ENCODE measurements at regions of chr4 and their contacts with region 1.

Region 1: GRCh38 chr4:75724066-75724866 is at the start of gene USO1:
- DNase-seq: peak; percentile 99
- H3K4me3 Mint-ChIP-seq: peak within 1 kb of the TSS; percentile 99
- H3K27ac Mint-ChIP-seq: peak within 1 kb of the TSS; percentile 97
- H3K4me1 Mint-ChIP-seq: peaks cover 47% of the 10 kb centered on the region
- H3K27me3 Mint-ChIP-seq: no peaks in the 10 kb centered on the region
- total RNA-seq, gene USO1: 42.1 to 42.4 TPM

Region 2: DNA sequence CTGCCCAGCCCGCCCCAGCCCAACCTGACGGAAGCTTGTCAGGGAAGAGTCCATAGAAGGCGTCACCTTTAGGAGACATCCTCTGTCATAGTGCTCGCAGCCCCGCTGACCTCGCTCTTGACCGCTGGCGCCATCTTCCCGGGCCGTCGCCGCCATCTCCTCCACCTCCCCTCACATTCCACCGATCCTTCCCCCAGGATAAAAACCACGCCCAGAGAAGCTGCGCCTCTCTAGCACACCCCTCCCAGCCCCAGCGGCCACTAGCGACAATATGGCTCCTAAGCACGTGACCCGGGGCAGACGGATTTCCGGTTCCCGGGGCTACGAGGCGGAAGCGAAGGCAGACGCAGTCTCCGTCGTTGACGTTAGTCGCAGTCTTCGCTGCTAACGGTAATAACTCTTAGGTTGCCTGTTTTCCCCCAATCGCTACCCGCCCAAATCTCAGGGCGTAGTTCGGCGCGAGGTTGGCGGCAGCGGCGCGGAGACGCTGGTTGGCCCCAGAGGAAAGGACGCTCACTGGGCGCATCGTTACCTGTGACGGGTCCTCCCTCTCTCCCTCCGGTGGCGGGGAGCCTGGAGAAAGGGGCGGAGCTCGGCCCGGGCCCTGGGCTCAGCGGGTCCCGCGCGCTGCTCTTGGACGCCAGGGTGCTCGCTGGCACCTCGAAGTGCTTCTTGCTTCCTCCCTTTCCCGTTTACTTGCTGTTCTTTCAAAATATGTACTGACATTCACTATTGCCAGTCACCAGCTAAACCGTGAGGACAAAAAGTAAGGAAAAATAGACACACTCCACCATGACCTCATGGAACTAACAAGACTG is 209.9 kb before region 1 on chr4 and contains the starts of genes RCHY1 and THAP6:
- CTCF ChIA-PET with region 1: interaction called, 4 read pairs
- intact Hi-C with region 1: loop called (anchors 1 kb)
- DNase-seq: peak; percentile 94
- H3K4me3 Mint-ChIP-seq: no peak within 1 kb of the TSS
- H3K27ac Mint-ChIP-seq: peak within 1 kb of the TSS; percentile 98
- H3K4me1 Mint-ChIP-seq: peaks cover 39% of the 10 kb centered on the region
- H3K27me3 Mint-ChIP-seq: no peaks in the 10 kb centered on the region
- total RNA-seq, gene RCHY1: 31.3 to 34.6 TPM
- total RNA-seq, gene THAP6: 14.3 to 15.4 TPM

Region 3: GRCh38 chr4:75666299-75666698 is 58.0 kb before region 1 on chr4:
- CTCF ChIA-PET with region 1: interaction called, 19 read pairs
- intact Hi-C with region 1: no loop called
- DNase-seq: no peak
- H3K4me3 Mint-ChIP-seq: peak overlapping the region; percentile 44
- H3K27ac Mint-ChIP-seq: peak overlapping the region; percentile 84
- H3K4me1 Mint-ChIP-seq: peaks cover 77% of the 10 kb centered on the region
- H3K27me3 Mint-ChIP-seq: no peaks in the 10 kb centered on the region

Region 4: GRCh38 chr4:75708218-75708691 is 16.0 kb before region 1 on chr4:
- CTCF ChIA-PET with region 1: interaction called, 12 read pairs
- intact Hi-C with region 1: no loop called
- DNase-seq: peak; percentile 58
- H3K4me3 Mint-ChIP-seq: no peak overlapping the region
- H3K27ac Mint-ChIP-seq: no peak overlapping the region
- H3K4me1 Mint-ChIP-seq: peaks cover 3% of the 10 kb centered on the region
- H3K27me3 Mint-ChIP-seq: no peaks in the 10 kb centered on the region

Region 5: GRCh38 chr4:75821966-75822365 is 97.7 kb after region 1 on chr4:
- CTCF ChIA-PET with region 1: no interaction called
- intact Hi-C with region 1: no loop called
- DNase-seq: no peak
- H3K4me3 Mint-ChIP-seq: no peak overlapping the region
- H3K27ac Mint-ChIP-seq: no peak overlapping the region
- H3K4me1 Mint-ChIP-seq: peaks cover 4% of the 10 kb centered on the region
- H3K27me3 Mint-ChIP-seq: peaks cover 3% of the 10 kb centered on the region

Region 6: GRCh38 chr4:75989846-75990528 is 265.7 kb after region 1 on chr4:
- CTCF ChIA-PET with region 1: no interaction called
- intact Hi-C with region 1: loop called (anchors 1 kb)
- DNase-seq: no peak
- H3K4me3 Mint-ChIP-seq: peak overlapping the region; percentile 85
- H3K27ac Mint-ChIP-seq: peak overlapping the region; percentile 72
- H3K4me1 Mint-ChIP-seq: peaks cover 27% of the 10 kb centered on the region
- H3K27me3 Mint-ChIP-seq: no peaks in the 10 kb centered on the region

Region 7: DNA sequence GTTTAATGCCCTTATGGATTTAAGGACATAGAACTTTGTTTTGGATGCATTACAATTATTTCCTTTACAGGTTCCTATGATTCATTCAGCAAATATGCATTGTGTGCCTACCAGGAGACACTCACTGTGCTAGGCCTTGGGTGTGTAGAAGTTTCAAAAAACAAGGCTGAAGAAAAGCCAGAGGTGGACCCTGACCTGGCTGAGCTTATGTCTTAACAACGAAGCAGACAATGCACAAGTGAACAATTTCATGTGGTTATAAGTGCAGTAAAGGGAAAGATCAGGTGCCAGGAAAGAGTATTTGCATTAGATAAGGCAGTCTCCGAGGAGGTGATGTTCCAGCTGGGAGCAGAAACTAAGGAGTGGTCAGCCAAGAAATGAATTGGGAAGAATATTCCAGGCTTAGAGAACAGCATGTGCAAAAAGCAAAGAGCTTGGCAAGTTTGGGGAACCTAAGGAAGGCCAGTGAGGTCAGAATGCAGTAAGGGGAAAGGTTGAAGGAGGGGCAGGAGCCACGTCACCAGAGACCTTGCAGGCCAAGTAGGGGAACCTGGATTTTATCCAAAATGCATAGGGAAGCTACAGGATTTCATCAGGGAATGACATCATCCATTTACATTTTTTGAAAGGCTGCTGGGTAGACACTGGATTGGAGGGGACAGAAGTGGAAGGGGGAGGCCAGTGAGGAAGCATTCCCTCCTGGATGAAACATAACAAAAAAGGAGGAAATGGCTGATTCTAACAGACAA is 980.0 kb after region 1 on chr4:
- CTCF ChIA-PET with region 1: no interaction called
- intact Hi-C with region 1: no loop called
- DNase-seq: no peak
- H3K4me3 Mint-ChIP-seq: no peak overlapping the region
- H3K27ac Mint-ChIP-seq: no peak overlapping the region
- H3K4me1 Mint-ChIP-seq: no peaks in the 10 kb centered on the region
- H3K27me3 Mint-ChIP-seq: no peaks in the 10 kb centered on the region

Measured in activated naive CD4-positive, alpha-beta T cell treated with anti-CD3 and anti-CD28 coated beads for 36 hours (primary cell).